Breast epithelium (tissue), 4 donors: ENCODE measurements at regions of chr9 and their contacts with region 1.

Region 1: GRCh38 chr9:7011395-7012067 is 253.8 kb downstream of the KDM4C start:
- DNase-seq: no peak
- H3K4me3 ChIP-seq: no peak overlapping the region
- H3K27ac ChIP-seq: no peak overlapping the region
- H3K4me1 ChIP-seq: no peaks in the 10 kb centered on the region
- H3K27me3 ChIP-seq: no peaks in the 10 kb centered on the region
- CTCF ChIP-seq: no peak
- POLR2A ChIP-seq: no peak

Region 2: DNA sequence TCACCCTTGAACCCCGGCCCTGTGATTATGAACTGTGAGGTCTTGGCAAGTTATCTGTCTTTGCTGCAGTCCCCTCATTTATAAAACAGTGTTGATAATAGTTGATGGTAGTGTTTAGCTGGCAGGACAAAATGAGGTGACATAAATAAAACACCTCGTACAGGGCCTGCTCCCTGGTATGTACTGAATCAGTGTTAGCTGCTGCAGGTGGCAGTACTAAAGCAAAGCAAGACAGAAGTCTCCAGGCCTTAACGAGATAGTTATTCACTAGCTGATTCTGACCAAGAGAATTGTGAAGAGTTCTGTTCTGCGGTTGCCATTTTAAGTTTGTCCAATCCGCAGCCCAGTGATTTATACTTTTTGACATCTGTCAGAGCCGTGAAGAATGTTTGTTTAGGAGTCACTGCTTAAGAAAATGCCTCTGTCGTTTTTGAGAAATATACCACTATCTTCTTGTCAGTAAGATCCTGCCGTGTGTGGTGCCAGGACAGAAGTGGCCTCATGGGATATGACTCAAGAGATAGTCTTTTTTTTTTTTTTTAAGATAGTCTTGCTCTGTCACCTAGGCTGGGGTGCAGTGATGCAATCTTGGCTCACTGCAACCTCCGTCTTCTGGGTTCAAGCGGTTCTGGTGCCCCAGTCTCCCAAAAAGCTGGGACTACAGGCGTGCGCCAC is 177.9 kb before region 1 on chr9:
- intact Hi-C with region 1: no loop called
- DNase-seq: no peak
- H3K4me3 ChIP-seq: no peak overlapping the region
- H3K27ac ChIP-seq: no peak overlapping the region
- H3K4me1 ChIP-seq: no peaks in the 10 kb centered on the region
- H3K27me3 ChIP-seq: no peaks in the 10 kb centered on the region
- CTCF ChIP-seq: no peak
- POLR2A ChIP-seq: no peak

Region 3: GRCh38 chr9:6955251-6955921 is 56.1 kb before region 1 on chr9:
- intact Hi-C with region 1: loop called (anchors 10 kb)
- DNase-seq: no peak
- H3K4me3 ChIP-seq: no peak overlapping the region
- H3K27ac ChIP-seq: no peak overlapping the region
- H3K4me1 ChIP-seq: no peaks in the 10 kb centered on the region
- H3K27me3 ChIP-seq: no peaks in the 10 kb centered on the region
- CTCF ChIP-seq: no peak
- POLR2A ChIP-seq: no peak